Sigmoid colon (tissue), 7 donors: ENCODE measurements at regions of chr10 and their contacts with region 1.

Region 1: GRCh38 chr10:17607603-17608332 is 9.4 kb downstream of the HACD1 start:
- DNase-seq: no peak
- H3K4me3 ChIP-seq: no peak overlapping the region
- H3K27ac ChIP-seq: peak overlapping the region in 2 of 4 donors; percentile 24 to 27
- H3K4me1 ChIP-seq: peaks cover 0 to 15% (median 9%) of the 10 kb centered on the region in 4 donors
- H3K27me3 ChIP-seq: no peaks in the 10 kb centered on the region
- CTCF ChIP-seq: peak; percentile 72 to 87 (median 78)
- EP300 ChIP-seq: no peak
- POLR2A ChIP-seq: no peak

Region 2: GRCh38 chr10:16832351-16833080 is 775.3 kb before region 1 on chr10:
- intact Hi-C with region 1: no loop called
- DNase-seq: no peak
- H3K4me3 ChIP-seq: no peak overlapping the region
- H3K27ac ChIP-seq: peak overlapping the region; percentile 18 to 63 (median 42)
- H3K4me1 ChIP-seq: peaks cover 0 to 7% (median 3%) of the 10 kb centered on the region in 4 donors
- H3K27me3 ChIP-seq: no peaks in the 10 kb centered on the region
- CTCF ChIP-seq: no peak
- EP300 ChIP-seq: no peak
- POLR2A ChIP-seq: no peak

Region 3: GRCh38 chr10:17586821-17587234 is 20.9 kb before region 1 on chr10:
- intact Hi-C with region 1: no loop called
- DNase-seq: no peak
- H3K4me3 ChIP-seq: no peak overlapping the region
- H3K27ac ChIP-seq: no peak overlapping the region
- H3K4me1 ChIP-seq: no peaks in the 10 kb centered on the region
- H3K27me3 ChIP-seq: no peaks in the 10 kb centered on the region
- CTCF ChIP-seq: no peak
- EP300 ChIP-seq: no peak
- POLR2A ChIP-seq: no peak

Region 4: DNA sequence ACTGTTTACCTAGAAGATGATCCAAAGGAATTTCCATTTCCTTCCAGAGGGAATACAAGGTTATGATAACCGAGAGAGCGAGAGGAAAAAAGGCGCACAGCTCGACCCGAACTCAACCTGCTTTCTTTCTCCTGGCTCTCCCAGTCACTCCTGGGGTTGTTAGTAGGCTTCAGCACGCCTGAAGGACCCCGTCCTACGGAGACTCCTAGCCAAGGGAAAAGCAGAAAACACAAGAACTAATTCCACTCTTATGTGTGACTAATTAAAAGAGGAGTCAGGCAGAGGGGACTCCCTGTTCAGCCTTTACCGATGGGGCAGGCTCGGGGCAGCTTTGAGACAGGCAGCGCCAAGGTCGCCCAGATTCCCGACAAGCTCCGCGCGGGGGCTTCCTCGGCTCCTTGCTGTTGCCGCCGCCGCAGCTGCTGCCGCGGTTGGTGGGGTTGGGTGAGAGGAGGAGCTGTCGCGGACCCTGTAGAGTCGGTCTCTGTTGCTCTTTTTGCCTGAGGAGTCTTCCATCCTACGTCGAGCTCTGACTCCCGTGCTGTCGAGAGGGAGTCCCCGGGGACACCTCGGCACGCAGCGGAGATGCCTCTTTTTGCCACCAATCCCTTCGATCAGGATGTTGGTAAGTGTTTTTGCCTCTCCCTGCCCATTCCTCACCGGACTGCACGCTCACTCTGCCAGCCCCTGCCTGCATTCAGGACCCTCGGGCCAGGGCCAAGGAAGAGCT is 36.2 kb after region 1 on chr10 and contains the start of gene STAM:
- intact Hi-C with region 1: loop called (anchors 5 kb)
- DNase-seq: peak; percentile 90
- H3K4me3 ChIP-seq: peak within 1 kb of the TSS; percentile 59 to 73 (median 69)
- H3K27ac ChIP-seq: peak within 1 kb of the TSS; percentile 86 to 97 (median 91)
- H3K4me1 ChIP-seq: peaks cover 0 to 46% (median 31%) of the 10 kb centered on the region in 4 donors
- H3K27me3 ChIP-seq: no peaks in the 10 kb centered on the region
- CTCF ChIP-seq: no peak
- EP300 ChIP-seq: peak in 1 of 4 donors; percentile 55
- POLR2A ChIP-seq: peak; percentile 19 to 31
- total RNA-seq, gene STAM: 13.7 to 19.3 (median 16.8) TPM

Region 5: DNA sequence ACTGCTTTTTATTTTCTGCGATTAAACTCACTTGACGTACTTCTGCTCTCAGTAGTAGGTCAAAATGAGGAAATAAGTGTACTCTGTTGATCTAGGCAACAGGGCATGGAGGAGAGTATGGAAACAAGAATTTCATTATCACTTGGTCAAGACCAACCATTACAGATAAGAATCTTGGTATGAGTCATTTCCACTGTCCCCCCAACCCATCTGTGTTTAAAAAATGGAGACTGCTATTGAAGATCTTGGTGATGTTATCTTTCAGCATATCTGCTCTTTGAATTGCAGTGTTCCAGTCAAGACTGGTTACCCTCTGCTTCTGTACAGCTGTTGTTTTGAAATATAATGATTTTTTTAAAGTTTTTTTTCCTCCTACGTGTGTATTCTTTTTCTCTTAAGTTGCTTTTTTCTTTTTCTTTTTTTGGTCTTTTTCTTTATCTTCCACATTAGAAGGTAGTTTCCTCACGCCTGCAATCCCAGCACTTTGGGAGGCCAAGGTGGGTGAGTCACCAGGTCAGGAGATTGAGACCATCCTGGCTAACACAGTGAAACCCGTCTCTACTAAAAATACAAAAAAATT is 47.9 kb after region 1 on chr10:
- intact Hi-C with region 1: no loop called
- DNase-seq: no peak
- H3K4me3 ChIP-seq: no peak overlapping the region
- H3K27ac ChIP-seq: no peak overlapping the region
- H3K4me1 ChIP-seq: peaks cover 0 to 18% (median 0%) of the 10 kb centered on the region in 4 donors
- H3K27me3 ChIP-seq: no peaks in the 10 kb centered on the region
- CTCF ChIP-seq: no peak
- EP300 ChIP-seq: no peak
- POLR2A ChIP-seq: no peak

Region 6: GRCh38 chr10:17742918-17743317 is 135.2 kb after region 1 on chr10:
- intact Hi-C with region 1: loop called (anchors 1 kb)
- DNase-seq: no peak
- H3K4me3 ChIP-seq: no peak overlapping the region
- H3K27ac ChIP-seq: no peak overlapping the region
- H3K4me1 ChIP-seq: no peaks in the 10 kb centered on the region
- H3K27me3 ChIP-seq: no peaks in the 10 kb centered on the region
- CTCF ChIP-seq: peak; percentile 62 to 93 (median 82)
- EP300 ChIP-seq: no peak
- POLR2A ChIP-seq: no peak

Region 7: DNA sequence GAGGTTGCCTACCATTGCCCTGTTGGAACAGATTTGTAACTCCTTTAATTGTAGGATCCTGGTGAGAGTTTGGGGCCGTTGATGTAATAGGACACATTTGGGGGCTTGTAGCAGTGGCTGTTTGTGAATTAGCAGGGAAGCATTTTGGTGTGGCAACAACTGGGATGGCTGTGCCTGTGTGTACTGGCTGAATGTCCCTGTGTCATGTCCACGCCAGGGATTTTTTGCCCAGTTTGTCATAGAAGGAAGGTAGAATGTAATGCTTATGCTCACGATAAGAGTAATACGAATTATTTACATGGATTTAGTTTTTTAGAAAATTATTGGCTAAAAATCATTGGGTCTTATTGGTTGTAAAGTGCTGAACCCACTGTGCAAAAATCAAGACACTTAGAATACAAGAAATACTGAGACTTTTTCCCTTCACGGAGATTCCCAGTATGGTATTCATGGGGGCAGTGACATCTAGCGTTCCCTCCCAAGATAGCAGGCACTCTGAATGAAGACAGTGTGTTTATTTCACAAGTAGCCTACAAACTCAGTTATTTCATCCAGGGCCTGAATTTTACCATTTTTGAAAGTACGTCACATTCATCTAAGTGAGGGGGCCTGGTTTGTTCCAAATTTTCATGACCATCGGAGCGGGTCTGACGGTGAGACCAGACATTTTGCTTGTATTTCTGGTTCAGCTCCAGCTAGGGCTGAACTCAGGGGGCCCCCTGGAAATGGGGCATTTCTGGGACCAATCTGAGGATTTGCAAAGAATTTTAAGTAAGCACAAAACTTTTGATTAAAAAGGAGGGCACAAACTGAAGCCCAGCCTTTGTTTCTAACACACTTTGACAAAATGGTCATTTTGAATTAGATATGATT is 607.2 kb after region 1 on chr10:
- intact Hi-C with region 1: loop called (anchors 5 kb)
- DNase-seq: peak; percentile 68
- H3K4me3 ChIP-seq: no peak overlapping the region
- H3K27ac ChIP-seq: peak overlapping the region in 2 of 4 donors; percentile 26 to 58
- H3K4me1 ChIP-seq: peaks cover 0 to 81% (median 66%) of the 10 kb centered on the region in 4 donors
- H3K27me3 ChIP-seq: no peaks in the 10 kb centered on the region
- CTCF ChIP-seq: peak; percentile 59 to 82 (median 78)
- EP300 ChIP-seq: no peak
- POLR2A ChIP-seq: no peak

Region 8: GRCh38 chr10:18238870-18239485 is 631.2 kb after region 1 on chr10:
- intact Hi-C with region 1: loop called (anchors 5 kb)
- DNase-seq: no peak
- H3K4me3 ChIP-seq: no peak overlapping the region
- H3K27ac ChIP-seq: peak overlapping the region in 3 of 4 donors; percentile 50 to 83 (median 56)
- H3K4me1 ChIP-seq: peaks cover 0 to 37% (median 22%) of the 10 kb centered on the region in 4 donors
- H3K27me3 ChIP-seq: no peaks in the 10 kb centered on the region
- CTCF ChIP-seq: peak; percentile 23 to 71 (median 52)
- EP300 ChIP-seq: no peak
- POLR2A ChIP-seq: no peak

Region 9: GRCh38 chr10:18438361-18439126 is 830.8 kb after region 1 on chr10:
- intact Hi-C with region 1: no loop called
- DNase-seq: no peak
- H3K4me3 ChIP-seq: no peak overlapping the region
- H3K27ac ChIP-seq: peak overlapping the region in 1 of 4 donors; percentile 24
- H3K4me1 ChIP-seq: peaks cover 0 to 2% (median 0%) of the 10 kb centered on the region in 4 donors
- H3K27me3 ChIP-seq: no peaks in the 10 kb centered on the region
- CTCF ChIP-seq: no peak
- EP300 ChIP-seq: no peak
- POLR2A ChIP-seq: no peak